BJ (cell line): ENCODE measurements at regions of chr11 and their contacts with region 1.

Region 1: GRCh38 chr11:130126516-130126915 is 33.1 kb upstream of the ST14 start:
- DNase-seq: no peak
- H3K4me3 ChIP-seq: no peak overlapping the region
- H3K27me3 ChIP-seq: no peaks in the 10 kb centered on the region
- CTCF ChIP-seq: no peak

Region 2: DNA sequence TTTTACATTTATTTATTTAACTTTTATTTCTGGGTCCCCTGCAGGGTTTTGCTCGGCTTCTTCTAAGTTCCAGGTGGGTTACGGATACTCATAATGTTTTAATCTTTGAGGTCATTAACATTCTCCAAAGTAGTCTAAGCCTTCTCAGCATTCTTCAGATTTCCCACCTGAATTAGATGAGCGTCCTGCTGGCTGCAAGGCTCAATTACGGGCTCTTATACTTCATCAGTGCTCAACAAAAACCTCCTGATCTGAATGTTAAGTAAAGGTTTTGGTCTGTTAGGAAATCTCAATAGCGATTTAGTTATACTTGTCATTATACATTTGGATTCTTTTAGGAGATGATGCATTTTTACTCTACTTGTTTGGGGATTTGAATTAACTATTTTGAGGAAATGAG is 203.8 kb before region 1 on chr11:
- CTCF ChIA-PET with region 1: interaction called, 100 read pairs
- POLR2A ChIA-PET with region 1: no interaction called
- DNase-seq: no peak
- H3K4me3 ChIP-seq: no peak overlapping the region
- H3K27me3 ChIP-seq: no peaks in the 10 kb centered on the region
- CTCF ChIP-seq: no peak